ENCODE measurements at regions of chr2 and their contacts with region 1.

Region 1: DNA sequence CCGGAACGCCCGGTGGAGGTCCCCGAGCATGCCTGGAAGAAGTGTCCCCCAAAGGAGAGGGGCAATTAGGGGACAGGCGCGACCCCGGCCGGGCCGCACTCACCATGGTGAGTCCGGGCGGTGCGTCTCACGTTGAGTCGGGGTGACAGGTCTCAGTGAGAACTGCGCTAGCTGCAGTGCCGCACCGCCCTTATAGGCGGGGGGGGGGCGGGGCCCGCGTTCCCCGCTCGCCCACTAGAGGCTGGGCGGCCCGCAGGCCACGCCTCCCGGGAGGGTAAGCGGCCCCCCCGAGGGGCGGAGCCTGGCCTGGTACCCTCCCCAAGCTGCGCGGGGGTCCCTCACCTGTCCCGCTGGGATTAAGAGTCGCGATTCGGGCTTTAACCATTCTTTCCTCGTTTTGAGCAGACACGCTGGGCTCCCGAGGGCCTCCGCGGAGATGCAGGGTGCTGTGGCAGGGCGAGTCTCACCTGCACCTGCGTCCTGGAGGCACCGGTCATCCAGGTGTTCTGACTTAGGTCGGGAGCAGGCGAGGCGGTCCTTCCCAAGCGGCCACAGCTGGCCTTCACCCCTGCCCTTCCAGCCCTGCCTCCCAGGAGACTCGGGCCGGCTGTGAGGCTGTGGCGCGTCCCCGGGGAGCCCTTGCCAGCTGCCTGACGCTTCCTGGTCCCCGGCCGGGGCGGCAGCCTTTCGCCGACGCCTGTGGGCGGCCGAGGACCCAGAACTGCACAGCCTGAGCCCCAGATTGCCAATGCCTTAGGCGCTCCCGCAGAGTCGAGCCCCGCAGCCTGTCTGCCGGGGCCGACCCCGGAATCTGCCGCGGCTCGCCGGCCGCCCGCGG is at the start of gene TUBA4A:
- DNase-seq: peak; percentile 91 to 95
- ATAC-seq: peak; percentile 78 to 92 (median 86)
- H3K4me3 ChIP-seq: peak within 1 kb of the TSS; percentile 93
- H3K4me3 Mint-ChIP-seq: peak within 1 kb of the TSS; percentile 88
- H3K27ac ChIP-seq: peak within 1 kb of the TSS; percentile 97
- H3K27ac Mint-ChIP-seq: peak within 1 kb of the TSS; percentile 86 to 98
- H3K4me1 ChIP-seq: peaks cover 50% of the 10 kb centered on the region
- H3K4me1 Mint-ChIP-seq: peaks cover 29 to 48% of the 10 kb centered on the region in 2 donors
- H3K27me3 ChIP-seq: no peaks in the 10 kb centered on the region
- H3K27me3 Mint-ChIP-seq: peaks cover 0 to 3% of the 10 kb centered on the region in 2 donors
- CTCF ChIP-seq: no peak
- total RNA-seq, gene TUBA4A: 145 to 188 (median 146) TPM

Region 2: DNA sequence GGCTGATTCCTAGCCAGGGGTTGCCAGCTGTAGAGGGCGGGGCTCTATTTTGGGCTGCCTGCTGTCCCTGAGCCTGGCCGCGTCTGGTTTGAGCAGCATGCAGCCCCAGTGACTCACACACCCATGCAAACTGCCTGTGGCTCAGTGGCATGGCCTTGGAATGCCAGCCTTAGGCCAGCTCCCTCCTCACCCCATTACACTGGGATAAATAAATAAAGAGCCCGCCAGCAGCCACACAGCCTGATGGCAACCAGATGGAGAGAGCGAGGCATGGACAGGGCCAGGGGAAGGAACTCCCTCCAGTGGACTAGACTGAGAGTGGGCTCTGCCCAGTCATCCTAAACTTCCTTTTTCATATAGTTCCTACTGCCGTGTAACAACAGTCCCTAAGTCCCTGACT is 111.6 kb before region 1 on chr2:
- intact Hi-C with region 1: no loop called
- DNase-seq: no peak
- ATAC-seq: no peak
- H3K4me3 ChIP-seq: no peak overlapping the region
- H3K4me3 Mint-ChIP-seq: no peak overlapping the region
- H3K27ac ChIP-seq: no peak overlapping the region
- H3K27ac Mint-ChIP-seq: no peak overlapping the region
- H3K4me1 ChIP-seq: no peaks in the 10 kb centered on the region
- H3K4me1 Mint-ChIP-seq: peaks cover 0 to 7% of the 10 kb centered on the region in 2 donors
- H3K27me3 ChIP-seq: no peaks in the 10 kb centered on the region
- H3K27me3 Mint-ChIP-seq: no peaks in the 10 kb centered on the region
- CTCF ChIP-seq: no peak

Region 3: DNA sequence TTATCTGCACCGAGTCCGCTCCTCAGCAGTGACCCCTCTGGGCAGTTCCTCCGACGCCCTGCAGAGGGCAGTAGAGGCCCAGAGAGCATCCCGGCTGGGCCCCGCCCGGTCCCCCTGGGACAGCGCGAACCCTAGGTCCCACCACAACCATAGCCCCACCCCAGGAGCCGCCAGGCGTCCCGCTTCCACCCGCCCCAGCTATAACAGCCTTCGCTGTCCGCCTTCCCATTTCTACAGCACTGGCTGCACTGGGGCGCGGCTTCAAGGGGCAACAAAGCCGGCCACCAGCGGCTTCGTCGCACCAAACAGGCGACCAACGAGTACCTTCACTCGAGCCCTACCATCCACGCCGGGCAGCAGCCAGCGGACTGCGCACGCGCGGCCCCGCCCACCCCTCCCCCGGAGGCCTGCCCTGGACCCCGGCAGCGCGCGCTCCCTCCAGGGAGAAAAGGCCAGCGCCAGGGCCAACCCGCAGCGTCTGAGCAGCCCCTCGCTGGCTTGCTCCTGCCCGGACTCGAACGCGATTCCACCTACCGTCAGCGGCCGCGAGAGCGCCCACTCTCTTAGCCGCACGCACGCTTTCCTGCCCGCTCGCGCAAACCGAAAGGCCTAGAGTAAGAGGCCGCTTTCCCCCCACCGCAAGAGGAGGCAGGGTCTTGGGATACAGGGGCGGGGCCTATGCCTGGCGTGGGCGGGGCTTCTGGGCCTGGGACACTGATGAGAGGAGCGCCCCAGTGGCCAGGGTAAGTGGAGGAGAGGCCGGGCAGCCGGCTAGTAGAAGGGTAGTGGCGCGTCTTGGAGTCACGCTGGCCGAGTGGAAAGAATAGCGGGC is 93.6 kb before region 1 on chr2 and contains the start of gene NHEJ1:
- intact Hi-C with region 1: loop called (anchors 1 kb)
- DNase-seq: peak; percentile 94 to 96
- ATAC-seq: peak; percentile 86 to 98 (median 90)
- H3K4me3 ChIP-seq: peak within 1 kb of the TSS; percentile 76
- H3K4me3 Mint-ChIP-seq: peak within 1 kb of the TSS; percentile 95
- H3K27ac ChIP-seq: peak within 1 kb of the TSS; percentile 80
- H3K27ac Mint-ChIP-seq: peak within 1 kb of the TSS; percentile 92 to 94
- H3K4me1 ChIP-seq: peaks cover 13% of the 10 kb centered on the region
- H3K4me1 Mint-ChIP-seq: peaks cover 16 to 31% of the 10 kb centered on the region in 2 donors
- H3K27me3 ChIP-seq: no peaks in the 10 kb centered on the region
- H3K27me3 Mint-ChIP-seq: no peaks in the 10 kb centered on the region
- CTCF ChIP-seq: peak; percentile 99
- total RNA-seq, gene NHEJ1: 9.9 to 12.7 (median 11.0) TPM

Region 4: DNA sequence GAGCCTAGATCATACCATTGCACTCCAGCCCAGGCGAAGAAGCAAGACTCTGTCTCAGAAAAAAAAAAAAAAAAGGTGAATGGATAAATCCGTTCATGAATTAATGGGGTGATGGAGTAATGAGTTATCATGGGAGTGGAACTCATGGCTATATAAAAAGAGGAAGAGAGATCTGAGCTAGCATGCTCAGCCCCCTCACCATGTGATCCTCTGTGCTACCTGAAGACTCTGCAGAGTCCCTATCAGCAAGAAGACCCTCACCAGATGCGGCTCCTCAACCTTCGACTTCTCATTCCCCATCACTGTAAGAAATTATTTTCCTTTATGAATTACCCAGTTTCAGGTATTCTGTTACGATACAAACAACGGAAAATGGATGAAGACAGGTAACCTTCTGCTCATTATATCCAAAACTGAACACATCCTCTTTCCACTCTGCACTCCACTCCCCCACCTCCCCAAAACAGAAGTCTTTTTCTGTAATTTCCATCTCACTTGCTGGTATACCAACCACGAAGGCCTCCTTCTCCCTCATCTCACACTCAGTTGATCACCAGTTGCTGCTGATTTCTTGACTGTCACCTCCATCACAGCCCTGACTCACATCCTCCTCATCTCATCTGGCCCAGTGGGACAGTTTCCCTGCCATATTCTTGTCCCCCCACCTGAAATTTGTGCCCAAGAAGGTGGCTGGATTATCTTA is 67.1 kb before region 1 on chr2:
- intact Hi-C with region 1: no loop called
- DNase-seq: no peak
- ATAC-seq: no peak
- H3K4me3 ChIP-seq: no peak overlapping the region
- H3K4me3 Mint-ChIP-seq: no peak overlapping the region
- H3K27ac ChIP-seq: no peak overlapping the region
- H3K27ac Mint-ChIP-seq: no peak overlapping the region
- H3K4me1 ChIP-seq: no peaks in the 10 kb centered on the region
- H3K4me1 Mint-ChIP-seq: peaks cover 0 to 7% of the 10 kb centered on the region in 2 donors
- H3K27me3 ChIP-seq: no peaks in the 10 kb centered on the region
- H3K27me3 Mint-ChIP-seq: no peaks in the 10 kb centered on the region
- CTCF ChIP-seq: no peak

Region 5: GRCh38 chr2:219218732-219219701 is 35.0 kb before region 1 on chr2 and contains the start of gene ABCB6:
- intact Hi-C with region 1: loop called (anchors 1 kb)
- DNase-seq: peak; percentile 73 to 92
- ATAC-seq: peak; percentile 83 to 89 (median 87)
- H3K4me3 ChIP-seq: peak within 1 kb of the TSS; percentile 46
- H3K4me3 Mint-ChIP-seq: peak within 1 kb of the TSS; percentile 83
- H3K27ac ChIP-seq: peak within 1 kb of the TSS; percentile 18
- H3K27ac Mint-ChIP-seq: peak within 1 kb of the TSS; percentile 62 to 75
- H3K4me1 ChIP-seq: peaks cover 25% of the 10 kb centered on the region
- H3K4me1 Mint-ChIP-seq: peaks cover 6 to 17% of the 10 kb centered on the region in 2 donors
- H3K27me3 ChIP-seq: no peaks in the 10 kb centered on the region
- H3K27me3 Mint-ChIP-seq: no peaks in the 10 kb centered on the region
- CTCF ChIP-seq: no peak
- total RNA-seq, gene ABCB6: 0.93 to 3.4 (median 1.9) TPM

Region 6: DNA sequence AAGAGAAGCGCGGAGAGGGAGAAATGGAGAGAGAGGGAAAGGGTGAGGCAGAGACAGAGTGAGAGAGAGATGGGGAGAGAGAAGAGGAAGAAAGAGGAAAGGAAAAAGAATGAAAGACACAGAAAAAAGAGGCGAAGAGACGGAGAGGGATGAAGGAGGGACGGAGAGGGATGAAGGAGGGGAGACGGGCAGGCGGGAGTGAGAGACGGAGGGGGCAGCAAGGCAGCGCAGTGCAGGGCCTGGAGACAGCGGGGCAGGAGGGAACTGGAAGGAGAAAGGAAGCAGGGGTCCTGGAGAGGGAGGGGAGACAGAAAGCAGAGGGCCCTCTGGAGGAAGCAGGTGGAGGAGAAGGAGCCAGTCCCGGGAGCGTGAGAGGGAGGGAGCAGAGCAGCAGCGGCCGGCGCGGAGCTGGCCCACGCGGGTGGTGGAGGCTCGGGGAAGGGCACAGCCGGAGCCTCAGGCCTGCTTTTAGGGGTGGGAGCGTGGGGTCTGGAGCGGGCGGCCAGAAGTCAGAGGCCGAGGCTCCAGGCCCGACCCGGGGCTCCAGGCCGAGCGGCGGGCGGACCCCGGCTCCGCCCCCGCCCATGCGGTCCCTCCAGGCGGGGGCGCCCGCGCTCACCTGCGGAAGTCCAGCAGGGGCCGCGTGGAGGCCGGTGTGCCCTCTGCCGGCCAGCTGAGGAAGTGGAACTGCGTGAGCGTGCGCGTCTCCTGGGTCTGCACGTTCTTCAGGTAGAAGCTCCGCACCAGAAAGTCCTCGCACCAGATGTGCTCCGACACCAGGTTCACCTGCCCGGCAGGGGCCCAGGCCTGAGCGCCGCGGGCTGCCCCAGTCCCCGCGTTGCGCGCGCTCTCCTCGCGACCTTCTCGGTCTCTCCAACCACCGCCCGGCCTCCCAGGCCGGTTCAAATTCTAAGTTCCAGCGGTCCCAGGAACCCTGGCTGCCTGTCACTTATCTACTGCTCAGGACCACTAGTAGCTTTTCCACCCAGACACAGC is 40.7 kb after region 1 on chr2:
- intact Hi-C with region 1: loop called (anchors 1 kb)
- DNase-seq: peak; percentile 88 to 96
- ATAC-seq: peak; percentile 95 to 97 (median 95)
- H3K4me3 ChIP-seq: peak overlapping the region; percentile 45
- H3K4me3 Mint-ChIP-seq: peak overlapping the region; percentile 73
- H3K27ac ChIP-seq: peak overlapping the region; percentile 69
- H3K27ac Mint-ChIP-seq: peak overlapping the region; percentile 78 to 80
- H3K4me1 ChIP-seq: peaks cover 14% of the 10 kb centered on the region
- H3K4me1 Mint-ChIP-seq: peaks cover 6 to 17% of the 10 kb centered on the region in 2 donors
- H3K27me3 ChIP-seq: peaks cover 7% of the 10 kb centered on the region
- H3K27me3 Mint-ChIP-seq: peaks cover 0 to 4% of the 10 kb centered on the region in 2 donors
- CTCF ChIP-seq: peak; percentile 99

Region 7: DNA sequence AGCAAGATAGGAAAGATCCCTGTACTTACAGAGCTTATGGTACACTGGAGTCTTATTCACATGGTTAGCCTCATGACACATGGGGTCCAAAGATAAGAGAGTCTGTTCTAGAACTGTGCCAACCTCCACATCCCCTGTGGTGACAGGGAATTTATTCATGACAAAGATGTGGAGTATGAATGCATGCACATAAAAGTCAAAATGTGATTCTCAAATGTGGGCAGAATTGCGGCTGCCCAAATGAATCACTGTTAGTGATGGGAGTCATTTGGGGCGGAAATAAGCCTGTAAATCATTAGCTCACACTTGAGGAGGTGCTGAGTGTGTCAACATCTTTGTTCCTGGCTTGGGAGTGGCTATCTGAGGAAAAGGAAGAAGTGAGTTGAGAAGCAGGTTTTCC is 934.1 kb after region 1 on chr2:
- intact Hi-C with region 1: no loop called
- DNase-seq: no peak
- ATAC-seq: no peak
- H3K4me3 ChIP-seq: no peak overlapping the region
- H3K4me3 Mint-ChIP-seq: no peak overlapping the region
- H3K27ac ChIP-seq: no peak overlapping the region
- H3K27ac Mint-ChIP-seq: no peak overlapping the region
- H3K4me1 ChIP-seq: no peaks in the 10 kb centered on the region
- H3K4me1 Mint-ChIP-seq: no peaks in the 10 kb centered on the region
- H3K27me3 ChIP-seq: no peaks in the 10 kb centered on the region
- H3K27me3 Mint-ChIP-seq: no peaks in the 10 kb centered on the region
- CTCF ChIP-seq: no peak

Measured in natural killer cell (primary cell).